Activated CD8-positive, alpha-beta T cell treated with anti-CD3 and anti-CD28 coated beads for 36 hours (primary cell): ENCODE measurements at regions of chr15 and their contacts with region 1.

Region 1: DNA sequence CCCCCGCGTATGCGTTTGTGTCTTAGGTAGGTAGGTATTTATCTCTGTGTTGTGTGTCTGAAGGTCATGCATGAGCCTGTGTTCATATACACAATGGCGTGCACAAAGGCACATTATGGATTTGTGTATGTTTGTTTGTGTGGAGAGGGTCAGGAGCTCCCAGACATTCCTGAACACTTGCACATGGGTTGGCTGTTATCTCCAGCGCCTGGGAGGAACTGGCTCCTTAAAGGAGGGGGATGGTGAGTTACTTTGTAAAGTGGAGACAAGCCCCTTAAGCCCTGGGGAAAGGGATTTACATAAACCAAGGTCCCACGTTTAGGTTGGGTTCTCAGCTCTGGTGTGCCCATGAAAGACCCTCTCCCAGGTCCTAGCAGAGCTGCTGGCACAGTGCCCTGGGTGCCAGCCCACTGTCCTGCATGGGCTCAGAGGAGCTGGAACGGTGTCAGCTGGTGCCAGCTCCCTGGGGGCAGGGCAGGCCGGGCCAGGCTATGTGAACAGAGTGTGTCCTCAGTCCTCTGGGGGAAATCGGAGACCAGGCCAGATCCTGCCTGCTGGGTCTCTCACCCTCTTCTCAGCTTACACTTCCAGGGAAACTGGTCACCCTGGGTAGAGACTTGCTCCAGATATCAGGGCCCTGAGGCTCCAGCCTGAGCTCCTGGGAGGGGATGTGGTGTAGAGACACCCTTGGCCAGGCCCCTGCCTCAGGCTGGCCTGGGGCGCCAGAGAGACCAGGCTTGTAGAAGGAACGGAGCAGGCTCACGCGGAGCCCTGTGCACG is 25.1 kb downstream of the SNX33 start:
- DNase-seq: no peak
- ATAC-seq: no peak
- H3K4me3 Mint-ChIP-seq: no peak overlapping the region
- H3K27ac Mint-ChIP-seq: no peak overlapping the region
- H3K4me1 Mint-ChIP-seq: no peaks in the 10 kb centered on the region
- H3K27me3 Mint-ChIP-seq: no peaks in the 10 kb centered on the region
- CTCF ChIP-seq: no peak

Region 2: GRCh38 chr15:75659928-75660645 is 12.7 kb before region 1 on chr15:
- CTCF ChIA-PET with region 1: no interaction called
- POLR2A ChIA-PET with region 1: no interaction called
- intact Hi-C with region 1: no loop called
- DNase-seq: no peak
- ATAC-seq: no peak
- H3K4me3 Mint-ChIP-seq: no peak overlapping the region
- H3K27ac Mint-ChIP-seq: no peak overlapping the region
- H3K4me1 Mint-ChIP-seq: no peaks in the 10 kb centered on the region
- H3K27me3 Mint-ChIP-seq: no peaks in the 10 kb centered on the region
- CTCF ChIP-seq: no peak

Region 3: GRCh38 chr15:75684642-75685041 is 11.8 kb after region 1 on chr15:
- CTCF ChIA-PET with region 1: interaction called, 14 read pairs
- POLR2A ChIA-PET with region 1: no interaction called
- intact Hi-C with region 1: no loop called
- DNase-seq: no peak
- ATAC-seq: no peak
- H3K4me3 Mint-ChIP-seq: no peak overlapping the region
- H3K27ac Mint-ChIP-seq: no peak overlapping the region
- H3K4me1 Mint-ChIP-seq: peaks cover 3% of the 10 kb centered on the region
- H3K27me3 Mint-ChIP-seq: no peaks in the 10 kb centered on the region
- CTCF ChIP-seq: no peak